Endothelial cell of umbilical vein (primary cell): ENCODE measurements at regions of chr17 and their contacts with region 1.

Region 1: DNA sequence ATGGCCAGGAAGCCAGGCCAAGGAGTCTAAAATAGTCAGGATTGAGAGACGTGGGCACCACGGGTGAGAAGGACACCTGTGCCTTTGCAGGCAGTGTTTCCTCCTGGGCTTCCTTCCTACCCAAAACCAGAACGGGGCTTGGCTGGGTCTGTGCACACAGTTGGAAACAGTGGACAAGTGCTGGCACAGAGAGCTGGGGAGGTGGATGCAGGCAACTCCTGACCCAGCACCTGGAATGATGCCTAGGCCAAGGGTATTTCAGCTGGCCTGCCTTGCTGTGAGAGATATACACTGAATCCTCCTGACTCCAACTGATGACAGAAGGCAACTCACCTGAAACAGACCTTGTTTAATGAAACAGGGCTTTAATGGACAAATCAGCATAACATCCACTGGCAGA is 186.2 kb downstream of the SLC39A11 start:
- DNase-seq: no peak
- H3K4me3 ChIP-seq: no peak overlapping the region
- H3K27ac ChIP-seq: peak overlapping the region; percentile 70
- H3K4me1 ChIP-seq: peaks cover 19% of the 10 kb centered on the region
- H3K27me3 ChIP-seq: no peaks in the 10 kb centered on the region
- CTCF ChIP-seq: no peak
- POLR2A ChIP-seq: no peak

Region 2: DNA sequence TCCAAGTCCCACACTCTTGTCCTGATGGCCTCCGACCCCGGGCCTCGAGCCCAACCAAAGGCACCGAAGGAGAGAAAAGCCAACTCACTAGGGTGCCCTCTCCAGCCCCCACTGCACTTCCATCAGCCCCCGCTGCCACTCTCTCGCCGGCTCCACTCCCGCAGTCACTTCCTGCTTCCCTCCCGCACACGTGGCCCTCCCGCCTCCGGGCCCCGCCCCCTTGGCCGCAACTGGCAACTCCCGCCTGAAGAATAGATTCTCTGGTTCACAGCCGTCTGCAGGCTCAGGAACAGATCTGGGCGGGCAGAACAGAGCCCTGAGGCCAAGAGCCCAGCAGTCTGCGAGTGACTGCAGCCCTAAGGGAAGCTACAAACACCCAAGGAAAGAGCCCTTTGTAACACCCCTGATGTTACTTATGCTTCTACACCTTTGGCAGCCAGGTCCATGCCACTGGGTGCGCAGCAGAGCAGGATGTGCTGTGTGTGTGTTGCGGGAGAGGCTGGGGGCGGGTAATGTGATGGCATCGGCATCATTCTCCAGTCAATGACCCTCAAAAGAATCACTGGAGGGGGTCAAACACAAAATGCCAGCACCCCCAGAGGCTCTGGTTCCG is 186.3 kb after region 1 on chr17 and contains the start of gene SLC39A11:
- CTCF ChIA-PET with region 1: no interaction called
- POLR2A ChIA-PET with region 1: no interaction called
- dilution Hi-C with region 1: no loop called
- intact Hi-C with region 1: loop called (anchors 1 kb)
- DNase-seq: peak; percentile 92
- H3K4me3 ChIP-seq: peak within 1 kb of the TSS; percentile 47 to 83 (median 61)
- H3K27ac ChIP-seq: no peak within 1 kb of the TSS
- H3K4me1 ChIP-seq: peaks cover 9% of the 10 kb centered on the region
- H3K27me3 ChIP-seq: no peaks in the 10 kb centered on the region
- CTCF ChIP-seq: no peak
- POLR2A ChIP-seq: peak; percentile 73
- total RNA-seq, gene SLC39A11: 11.9 and 12.4 TPM in 2 replicates